ENCODE measurements at regions of chr5 and their contacts with region 1.

Region 1: DNA sequence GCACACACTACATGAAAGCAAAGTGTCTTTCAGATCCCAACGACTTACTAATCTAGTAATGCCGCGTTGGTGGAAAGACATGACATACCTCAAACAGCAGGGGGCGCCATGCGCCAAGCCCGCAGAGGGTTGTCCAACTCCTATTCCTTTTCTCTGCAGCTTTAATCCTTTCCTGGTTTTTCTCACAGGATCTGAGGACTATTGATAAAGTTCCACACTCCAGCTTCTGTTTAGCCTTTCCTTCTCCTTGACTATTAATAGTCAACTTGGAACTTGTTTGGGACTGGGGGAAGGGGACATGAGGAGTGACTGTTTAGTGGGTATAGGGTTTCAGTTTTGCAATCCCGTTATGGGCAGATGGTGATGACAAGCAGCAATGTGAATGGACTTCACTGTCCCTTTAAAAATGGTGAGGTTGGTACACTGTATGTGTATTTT is 62.9 kb downstream of the OTULIN start:
- DNase-seq: no peak
- ATAC-seq: peak; percentile 90
- H3K4me3 ChIP-seq: no peak overlapping the region
- H3K27ac ChIP-seq: no peak overlapping the region
- H3K4me1 ChIP-seq: no peaks in the 10 kb centered on the region
- H3K27me3 ChIP-seq: no peaks in the 10 kb centered on the region
- CTCF ChIP-seq: peak; percentile 88 to 95 (median 94)
- EP300 ChIP-seq: no peak
- POLR2A ChIP-seq: no peak
- RAD21 ChIP-seq: peak; percentile 98

Region 2: DNA sequence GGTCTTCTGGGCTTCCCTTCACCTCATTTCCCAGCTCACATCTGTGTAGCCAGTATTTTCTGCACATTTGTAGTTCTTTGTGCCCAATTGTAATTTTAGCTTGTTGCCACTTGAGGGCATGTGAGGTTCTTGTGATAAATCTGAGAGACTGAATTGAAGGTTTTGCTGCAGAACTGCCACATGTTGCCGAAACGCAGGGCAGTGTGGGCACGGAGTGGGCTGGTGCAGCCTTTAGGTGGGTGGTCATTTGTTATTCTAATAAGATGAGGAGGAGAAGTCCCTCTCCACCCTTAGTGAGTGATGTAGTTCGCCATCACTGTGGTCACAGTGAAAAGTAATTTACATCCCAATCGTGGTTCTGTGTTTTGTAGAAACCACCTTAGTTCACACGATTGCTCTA is 41.7 kb before region 1 on chr5:
- CTCF ChIA-PET with region 1: interaction called, 19 read pairs
- POLR2A ChIA-PET with region 1: no interaction called
- RAD21 ChIA-PET with region 1: interaction called, 4 read pairs
- SMC1A ChIA-PET with region 1: interaction called, 9 read pairs
- in situ Hi-C with region 1: no loop called
- intact Hi-C with region 1: no loop called
- DNase-seq: peak; percentile 68
- ATAC-seq: peak; percentile 96
- H3K4me3 ChIP-seq: no peak overlapping the region
- H3K27ac ChIP-seq: no peak overlapping the region
- H3K4me1 ChIP-seq: no peaks in the 10 kb centered on the region
- H3K27me3 ChIP-seq: no peaks in the 10 kb centered on the region
- CTCF ChIP-seq: peak; percentile 64 to 74 (median 71); a peak in 5 of 6 replicates
- EP300 ChIP-seq: no peak
- POLR2A ChIP-seq: no peak
- RAD21 ChIP-seq: peak; percentile 72

Region 3: GRCh38 chr5:14801792-14802191 is 74.3 kb after region 1 on chr5:
- CTCF ChIA-PET with region 1: no interaction called
- POLR2A ChIA-PET with region 1: no interaction called
- RAD21 ChIA-PET with region 1: no interaction called
- SMC1A ChIA-PET with region 1: no interaction called
- in situ Hi-C with region 1: no loop called
- intact Hi-C with region 1: no loop called
- DNase-seq: no peak
- ATAC-seq: no peak
- H3K4me3 ChIP-seq: no peak overlapping the region
- H3K27ac ChIP-seq: no peak overlapping the region
- H3K4me1 ChIP-seq: no peaks in the 10 kb centered on the region
- H3K27me3 ChIP-seq: no peaks in the 10 kb centered on the region
- CTCF ChIP-seq: no peak
- EP300 ChIP-seq: no peak
- POLR2A ChIP-seq: no peak
- RAD21 ChIP-seq: no peak

Region 4: GRCh38 chr5:14871210-14872069 is 144.0 kb after region 1 on chr5 and contains the start of gene ANKH:
- CTCF ChIA-PET with region 1: interaction called, 21 read pairs
- POLR2A ChIA-PET with region 1: no interaction called
- RAD21 ChIA-PET with region 1: interaction called, 7 read pairs
- SMC1A ChIA-PET with region 1: interaction called, 17 read pairs
- in situ Hi-C with region 1: no loop called
- intact Hi-C with region 1: loop called (anchors 1 kb)
- DNase-seq: no peak
- ATAC-seq: peak; percentile 86
- H3K4me3 ChIP-seq: peak within 1 kb of the TSS; percentile 77
- H3K27ac ChIP-seq: no peak within 1 kb of the TSS; the same call in 1 of the 2 replicates
- H3K4me1 ChIP-seq: no peaks in the 10 kb centered on the region
- H3K27me3 ChIP-seq: no peaks in the 10 kb centered on the region
- CTCF ChIP-seq: peak in 2 of 3 experiments; percentile 38 to 57; a peak in 3 of 6 replicates
- EP300 ChIP-seq: no peak
- POLR2A ChIP-seq: peak; percentile 32; the same call in 1 of the 2 replicates
- RAD21 ChIP-seq: peak; percentile 42
- polyA plus RNA-seq, gene ANKH: 3.8 to 5.1 TPM

Region 5: DNA sequence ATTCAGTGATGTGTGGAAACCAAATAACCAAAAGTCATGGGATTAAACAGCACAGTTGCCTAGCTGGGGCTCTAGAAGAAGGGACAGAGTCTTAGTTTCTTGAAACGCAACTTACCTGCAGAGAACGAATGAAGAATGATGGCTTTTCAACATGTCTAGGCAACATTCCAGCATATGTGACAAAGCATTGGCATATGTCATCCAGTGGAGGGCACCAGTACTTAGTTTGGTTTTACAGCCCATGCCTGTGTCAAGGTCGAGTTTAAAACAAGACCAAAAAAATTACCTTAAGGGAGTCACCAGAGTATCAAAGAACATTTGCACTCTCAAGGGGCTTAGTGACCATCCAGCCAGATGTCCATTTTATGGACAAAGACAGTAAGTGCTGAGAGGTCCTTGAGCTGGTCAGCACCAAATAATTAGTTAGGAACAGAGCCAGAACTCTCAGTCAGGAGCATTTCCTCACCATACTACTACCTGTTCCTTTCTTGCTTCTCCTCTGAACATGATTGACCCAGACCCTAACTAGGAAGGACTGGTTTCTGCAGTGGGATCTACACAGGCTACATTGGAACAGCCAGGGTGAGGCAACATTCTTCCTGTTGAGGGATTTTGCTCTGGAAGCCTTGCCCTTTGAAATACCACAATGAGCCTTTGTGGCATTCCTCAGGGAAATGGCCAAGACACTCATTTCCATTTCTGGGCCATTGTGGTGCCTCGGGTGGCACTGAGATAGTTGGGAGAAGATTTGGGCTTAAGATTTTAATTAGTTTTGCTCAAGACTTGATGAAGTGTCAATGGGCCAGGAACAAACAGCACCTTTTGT is 219.6 kb after region 1 on chr5:
- CTCF ChIA-PET with region 1: interaction called, 4 read pairs
- POLR2A ChIA-PET with region 1: no interaction called
- RAD21 ChIA-PET with region 1: no interaction called
- SMC1A ChIA-PET with region 1: interaction called, 3 read pairs
- in situ Hi-C with region 1: no loop called
- intact Hi-C with region 1: loop called (anchors 5 kb)
- DNase-seq: peak; percentile 15
- ATAC-seq: peak; percentile 85
- H3K4me3 ChIP-seq: no peak overlapping the region
- H3K27ac ChIP-seq: no peak overlapping the region
- H3K4me1 ChIP-seq: no peaks in the 10 kb centered on the region
- H3K27me3 ChIP-seq: no peaks in the 10 kb centered on the region; a peak in 1 of 4 replicates
- CTCF ChIP-seq: peak; percentile 47 to 59 (median 50); a peak in 5 of 6 replicates
- EP300 ChIP-seq: no peak
- POLR2A ChIP-seq: no peak
- RAD21 ChIP-seq: peak; percentile 42; the same call in 1 of the 2 replicates

Region 6: GRCh38 chr5:14996997-14997396 is 269.6 kb after region 1 on chr5:
- CTCF ChIA-PET with region 1: interaction called, 213 read pairs
- POLR2A ChIA-PET with region 1: interaction called, 6 read pairs
- RAD21 ChIA-PET with region 1: interaction called, 65 read pairs
- SMC1A ChIA-PET with region 1: interaction called, 90 read pairs
- in situ Hi-C with region 1: loop called (anchors 5 kb)
- intact Hi-C with region 1: no loop called
- DNase-seq: peak; percentile 20
- ATAC-seq: peak; percentile 86
- H3K4me3 ChIP-seq: no peak overlapping the region
- H3K27ac ChIP-seq: no peak overlapping the region
- H3K4me1 ChIP-seq: peaks cover 9% of the 10 kb centered on the region
- H3K27me3 ChIP-seq: no peaks in the 10 kb centered on the region
- CTCF ChIP-seq: no peak
- EP300 ChIP-seq: no peak
- POLR2A ChIP-seq: no peak
- RAD21 ChIP-seq: no peak

Region 7: DNA sequence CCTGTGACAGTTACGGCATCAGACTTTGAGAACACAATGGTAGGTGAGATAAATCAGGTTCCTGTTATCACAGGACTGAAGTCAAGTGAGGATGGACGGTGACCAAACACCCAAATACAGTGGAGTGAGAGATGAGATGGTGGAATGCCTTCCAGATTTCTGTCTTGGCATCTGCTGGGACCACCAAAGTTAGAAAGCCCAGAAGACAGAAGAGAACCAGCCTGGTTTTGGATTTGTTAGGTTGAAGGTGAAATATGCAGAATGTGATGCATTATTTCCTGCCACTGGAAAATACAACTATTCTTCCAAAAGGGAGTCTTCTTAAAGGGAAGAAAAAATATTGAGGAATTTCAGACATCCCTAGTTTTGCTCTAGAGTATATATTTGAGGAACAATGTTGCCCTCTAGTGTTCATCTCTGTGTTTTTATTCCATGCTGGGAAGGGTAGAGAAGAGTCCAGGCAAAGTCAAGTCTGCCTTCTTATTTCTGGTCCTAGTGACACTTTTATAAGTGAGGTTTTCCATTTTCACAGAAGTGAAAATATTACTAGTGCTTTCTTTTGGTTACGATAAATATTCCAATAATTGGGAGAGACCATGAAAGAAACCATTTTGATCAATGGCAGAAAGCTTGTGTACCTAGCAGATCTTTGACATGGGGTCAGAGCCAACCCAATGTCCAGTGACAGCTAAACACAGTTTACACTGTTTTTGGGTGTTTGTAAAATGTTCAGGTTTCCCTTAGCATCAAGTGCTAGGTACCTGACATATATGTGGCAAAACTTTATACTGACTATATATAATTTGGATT is 286.4 kb after region 1 on chr5:
- CTCF ChIA-PET with region 1: interaction called, 24 read pairs
- POLR2A ChIA-PET with region 1: no interaction called
- RAD21 ChIA-PET with region 1: interaction called, 5 read pairs
- SMC1A ChIA-PET with region 1: interaction called, 10 read pairs
- in situ Hi-C with region 1: no loop called
- intact Hi-C with region 1: loop called (anchors 2 kb)
- DNase-seq: no peak
- ATAC-seq: peak; percentile 91
- H3K4me3 ChIP-seq: no peak overlapping the region
- H3K27ac ChIP-seq: no peak overlapping the region
- H3K4me1 ChIP-seq: no peaks in the 10 kb centered on the region
- H3K27me3 ChIP-seq: no peaks in the 10 kb centered on the region
- CTCF ChIP-seq: peak; percentile 36 to 64 (median 51); a peak in 5 of 6 replicates
- EP300 ChIP-seq: no peak
- POLR2A ChIP-seq: no peak
- RAD21 ChIP-seq: peak; percentile 64

Region 8: DNA sequence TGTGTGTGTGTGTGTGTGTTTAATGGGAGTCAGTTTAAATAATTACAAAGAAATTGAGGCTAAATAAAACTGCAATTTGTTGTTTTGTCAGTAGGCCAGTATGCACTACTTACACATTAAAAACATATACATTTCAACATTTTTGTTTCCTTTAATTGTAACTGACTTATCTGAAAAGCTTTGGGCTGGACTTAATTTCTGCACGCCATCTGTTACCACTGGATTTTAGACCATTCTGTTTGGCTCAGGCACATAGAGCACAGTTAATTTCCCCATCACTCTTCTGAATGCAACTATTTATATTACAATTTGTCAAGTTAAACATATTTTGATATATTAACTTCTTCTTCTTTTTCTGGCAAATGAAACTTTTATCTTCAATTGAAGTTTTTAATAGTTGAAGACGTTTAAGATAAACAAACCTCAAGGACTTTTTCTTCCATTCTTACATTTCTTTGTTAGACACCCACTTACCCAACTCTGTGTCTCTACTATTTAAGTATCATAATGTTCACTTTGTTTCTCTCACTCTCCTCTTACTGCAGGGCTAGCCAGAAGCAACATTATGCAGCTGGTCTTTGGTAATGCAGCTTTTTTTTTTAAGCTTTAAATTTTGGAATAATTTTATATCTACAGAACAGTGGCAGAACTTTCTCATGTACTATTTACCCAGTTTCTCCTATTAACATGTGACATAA is 397.6 kb after region 1 on chr5:
- CTCF ChIA-PET with region 1: no interaction called
- POLR2A ChIA-PET with region 1: no interaction called
- RAD21 ChIA-PET with region 1: no interaction called
- SMC1A ChIA-PET with region 1: no interaction called
- in situ Hi-C with region 1: no loop called
- intact Hi-C with region 1: no loop called
- DNase-seq: no peak
- ATAC-seq: no peak
- H3K4me3 ChIP-seq: no peak overlapping the region
- H3K27ac ChIP-seq: no peak overlapping the region
- H3K4me1 ChIP-seq: no peaks in the 10 kb centered on the region
- H3K27me3 ChIP-seq: no peaks in the 10 kb centered on the region
- CTCF ChIP-seq: no peak
- EP300 ChIP-seq: no peak
- POLR2A ChIP-seq: no peak
- RAD21 ChIP-seq: no peak

Region 9: DNA sequence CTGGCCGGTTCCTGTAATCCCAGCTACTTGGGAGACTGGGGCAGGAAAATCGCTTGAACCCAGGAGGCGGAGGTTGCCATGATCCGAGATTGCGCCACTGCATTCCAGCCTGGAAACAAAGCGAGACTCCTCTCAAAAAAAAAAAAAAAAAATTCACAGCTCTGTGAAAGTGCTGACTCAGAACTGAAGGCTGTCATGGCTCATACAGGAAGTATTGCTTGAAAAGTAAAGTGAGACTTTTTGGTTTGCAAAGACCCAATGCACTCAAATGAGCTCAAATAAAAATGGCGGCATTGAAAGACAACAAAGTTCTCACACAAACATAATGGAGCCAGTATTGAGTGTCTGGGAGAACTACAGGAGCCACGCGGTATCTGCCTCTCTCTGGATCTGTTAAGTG is 974.7 kb after region 1 on chr5:
- CTCF ChIA-PET with region 1: no interaction called
- POLR2A ChIA-PET with region 1: no interaction called
- RAD21 ChIA-PET with region 1: no interaction called
- SMC1A ChIA-PET with region 1: no interaction called
- in situ Hi-C with region 1: no loop called
- intact Hi-C with region 1: no loop called
- DNase-seq: no peak
- ATAC-seq: peak; percentile 61
- H3K4me3 ChIP-seq: no peak overlapping the region
- H3K27ac ChIP-seq: no peak overlapping the region
- H3K4me1 ChIP-seq: no peaks in the 10 kb centered on the region
- H3K27me3 ChIP-seq: no peaks in the 10 kb centered on the region
- CTCF ChIP-seq: no peak
- EP300 ChIP-seq: no peak
- POLR2A ChIP-seq: no peak
- RAD21 ChIP-seq: no peak

Measured in GM12878 (cell line).